SK-N-SH (cell line): ENCODE measurements at regions of chr14 and their contacts with region 1.

Region 1: DNA sequence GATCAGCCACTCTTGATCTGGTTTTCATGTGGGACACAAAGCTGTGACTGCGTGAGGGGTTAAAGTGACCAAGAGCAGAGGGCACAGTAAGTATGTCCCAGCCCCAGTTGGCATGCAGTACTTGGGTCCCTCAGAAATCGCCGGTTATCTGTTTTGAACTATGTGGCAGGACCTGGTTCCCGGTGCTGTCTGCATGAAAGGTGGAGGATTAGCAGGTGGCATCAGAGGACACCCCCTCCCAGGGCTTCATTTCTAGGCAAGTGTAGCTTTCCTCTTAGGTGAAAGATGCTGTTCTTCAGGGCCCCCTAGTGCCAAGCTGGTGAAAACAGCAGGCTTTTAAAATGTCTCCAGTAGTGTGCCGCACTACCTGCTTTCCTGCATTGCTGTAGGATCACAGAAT is 57.1 kb downstream of the ATG14 start:
- DNase-seq: peak; percentile 63
- H3K4me3 ChIP-seq: no peak overlapping the region
- H3K27ac ChIP-seq: no peak overlapping the region; a peak in 1 of 4 replicates
- H3K4me1 ChIP-seq: no peaks in the 10 kb centered on the region; a peak in 1 of 4 replicates
- H3K27me3 ChIP-seq: no peaks in the 10 kb centered on the region
- CTCF ChIP-seq: peak; percentile 68
- EP300 ChIP-seq: no peak
- RAD21 ChIP-seq: peak; percentile 88

Region 2: GRCh38 chr14:55212634-55213033 is 141.9 kb before region 1 on chr14:
- CTCF ChIA-PET with region 1: interaction called, 21 read pairs
- POLR2A ChIA-PET with region 1: no interaction called
- DNase-seq: no peak
- H3K4me3 ChIP-seq: no peak overlapping the region
- H3K27ac ChIP-seq: no peak overlapping the region
- H3K4me1 ChIP-seq: no peaks in the 10 kb centered on the region
- H3K27me3 ChIP-seq: no peaks in the 10 kb centered on the region
- CTCF ChIP-seq: no peak
- EP300 ChIP-seq: no peak
- RAD21 ChIP-seq: no peak

Region 3: DNA sequence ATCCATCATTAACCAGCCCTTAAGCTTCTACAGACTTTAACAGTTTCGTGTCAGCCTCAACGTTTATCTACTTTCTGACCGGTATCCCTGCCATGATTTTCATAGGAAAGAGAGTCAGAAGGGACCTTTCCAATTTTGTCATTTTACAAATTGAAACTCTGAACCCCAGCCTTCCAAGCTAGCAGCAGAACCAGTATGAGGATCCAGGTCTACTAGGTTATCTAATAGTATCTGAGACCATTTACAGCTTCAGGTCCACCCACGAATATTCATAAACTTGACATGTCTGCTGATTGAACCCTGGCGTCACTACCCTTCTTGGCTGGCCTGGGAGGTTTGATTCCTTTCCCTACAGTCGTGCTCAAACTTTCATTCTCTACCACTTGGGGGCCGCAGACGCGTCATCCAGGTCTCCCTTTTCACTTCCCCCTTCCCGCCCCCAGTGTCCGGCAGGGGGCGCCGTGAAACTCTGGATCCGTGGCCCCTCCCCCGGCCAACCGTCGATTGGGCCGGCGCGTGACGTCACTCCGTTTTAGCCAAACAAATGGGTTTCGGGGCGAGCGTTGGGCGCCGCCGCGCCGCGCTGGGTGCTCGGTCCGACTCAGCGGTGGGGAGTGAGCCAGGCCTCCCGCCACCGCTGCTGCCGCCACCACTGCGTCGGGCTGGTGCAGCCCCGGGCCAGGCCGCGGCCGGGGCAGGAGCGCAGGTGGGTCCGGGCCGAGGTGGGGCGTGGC is 83.5 kb before region 1 on chr14 and contains the start of gene FBXO34:
- CTCF ChIA-PET with region 1: interaction called, 94 read pairs
- POLR2A ChIA-PET with region 1: no interaction called
- DNase-seq: peak; percentile 97
- H3K4me3 ChIP-seq: peak within 1 kb of the TSS; percentile 69 to 98
- H3K27ac ChIP-seq: peak within 1 kb of the TSS; percentile 78 to 79
- H3K4me1 ChIP-seq: peaks cover 13 to 17% of the 10 kb centered on the region in 2 experiments; a peak in 3 of 4 replicates
- H3K27me3 ChIP-seq: no peaks in the 10 kb centered on the region
- CTCF ChIP-seq: peak; percentile 98
- EP300 ChIP-seq: peak in 1 of 2 experiments; percentile 9; a peak in 1 of 4 replicates
- RAD21 ChIP-seq: peak; percentile 83
- polyA plus RNA-seq, gene FBXO34: 10.0 and 13.2 TPM in 2 replicates

Region 4: GRCh38 chr14:55309761-55310365 is 44.6 kb before region 1 on chr14:
- CTCF ChIA-PET with region 1: interaction called, 12 read pairs
- POLR2A ChIA-PET with region 1: no interaction called
- DNase-seq: no peak
- H3K4me3 ChIP-seq: no peak overlapping the region
- H3K27ac ChIP-seq: 0 out of 4 replicates have a peak overlapping the region, but pooled peaks of 1 of the 2 experiments have one; percentile 0
- H3K4me1 ChIP-seq: peaks cover 2 to 10% of the 10 kb centered on the region in 2 experiments; a peak in 3 of 4 replicates
- H3K27me3 ChIP-seq: no peaks in the 10 kb centered on the region
- CTCF ChIP-seq: no peak
- EP300 ChIP-seq: no peak
- RAD21 ChIP-seq: no peak

Region 5: GRCh38 chr14:55373784-55374705 is 19.5 kb after region 1 on chr14:
- CTCF ChIA-PET with region 1: interaction called, 18 read pairs
- POLR2A ChIA-PET with region 1: no interaction called
- DNase-seq: no peak
- H3K4me3 ChIP-seq: no peak overlapping the region
- H3K27ac ChIP-seq: no peak overlapping the region
- H3K4me1 ChIP-seq: no peaks in the 10 kb centered on the region
- H3K27me3 ChIP-seq: no peaks in the 10 kb centered on the region
- CTCF ChIP-seq: no peak
- EP300 ChIP-seq: no peak
- RAD21 ChIP-seq: no peak

Region 6: GRCh38 chr14:55430024-55430690 is 75.7 kb after region 1 on chr14:
- CTCF ChIA-PET with region 1: no interaction called
- POLR2A ChIA-PET with region 1: no interaction called
- DNase-seq: peak; percentile 59
- H3K4me3 ChIP-seq: no peak overlapping the region
- H3K27ac ChIP-seq: no peak overlapping the region
- H3K4me1 ChIP-seq: no peaks in the 10 kb centered on the region
- H3K27me3 ChIP-seq: no peaks in the 10 kb centered on the region; the same call in 1 of the 2 replicates
- CTCF ChIP-seq: peak; percentile 59
- EP300 ChIP-seq: no peak
- RAD21 ChIP-seq: peak; percentile 71

Region 7: DNA sequence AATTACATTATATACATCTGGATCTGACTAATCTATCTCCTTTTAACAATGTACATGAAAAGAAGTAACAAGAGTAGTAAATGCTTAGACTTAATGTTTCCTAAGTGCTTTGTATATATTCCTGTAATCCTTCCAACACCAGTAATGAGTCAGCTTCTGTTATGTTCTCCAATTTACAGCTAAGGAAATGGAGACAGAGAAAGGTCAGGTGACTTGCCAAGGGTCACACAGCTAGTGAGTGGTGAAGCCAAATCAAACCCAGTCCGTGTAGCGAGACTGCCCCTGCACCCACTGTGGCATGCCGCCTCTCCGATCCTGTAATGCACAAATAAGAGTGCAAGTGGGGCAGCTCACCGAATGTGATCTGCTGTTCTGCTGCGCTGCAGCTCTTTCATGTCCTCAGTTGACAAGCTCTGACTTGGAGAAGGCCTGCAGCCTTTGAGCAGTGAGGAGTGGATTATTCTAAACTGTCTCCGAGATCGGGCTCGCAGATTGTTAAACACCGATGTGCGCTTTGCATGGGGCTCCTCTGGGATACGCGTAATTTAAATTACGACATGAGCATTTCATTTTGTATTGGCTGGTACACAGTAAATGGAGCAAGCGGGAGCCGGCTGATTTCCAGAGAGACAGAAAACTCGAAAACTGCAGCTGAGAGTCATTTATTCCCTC is 160.5 kb after region 1 on chr14:
- CTCF ChIA-PET with region 1: no interaction called
- POLR2A ChIA-PET with region 1: no interaction called
- DNase-seq: no peak
- H3K4me3 ChIP-seq: no peak overlapping the region
- H3K27ac ChIP-seq: no peak overlapping the region
- H3K4me1 ChIP-seq: no peaks in the 10 kb centered on the region; a peak in 1 of 4 replicates
- H3K27me3 ChIP-seq: no peaks in the 10 kb centered on the region
- CTCF ChIP-seq: no peak
- EP300 ChIP-seq: no peak
- RAD21 ChIP-seq: no peak